Activated T-helper 1 cell treated with anti-CD3 and anti-CD28 coated beads, Interleukin-12 subunit alpha, Interleukin-12 subunit beta, Interleukin-2, Interleukin-4 antibody, amounts not matched to agents 30 ng/mL and 10 ng/mL and 1 ng/mL, durations not matched to agents 14 hours and 24 hours and 36 hours (primary cell): ENCODE measurements at regions of chr21 and their contacts with region 1.

Region 1: DNA sequence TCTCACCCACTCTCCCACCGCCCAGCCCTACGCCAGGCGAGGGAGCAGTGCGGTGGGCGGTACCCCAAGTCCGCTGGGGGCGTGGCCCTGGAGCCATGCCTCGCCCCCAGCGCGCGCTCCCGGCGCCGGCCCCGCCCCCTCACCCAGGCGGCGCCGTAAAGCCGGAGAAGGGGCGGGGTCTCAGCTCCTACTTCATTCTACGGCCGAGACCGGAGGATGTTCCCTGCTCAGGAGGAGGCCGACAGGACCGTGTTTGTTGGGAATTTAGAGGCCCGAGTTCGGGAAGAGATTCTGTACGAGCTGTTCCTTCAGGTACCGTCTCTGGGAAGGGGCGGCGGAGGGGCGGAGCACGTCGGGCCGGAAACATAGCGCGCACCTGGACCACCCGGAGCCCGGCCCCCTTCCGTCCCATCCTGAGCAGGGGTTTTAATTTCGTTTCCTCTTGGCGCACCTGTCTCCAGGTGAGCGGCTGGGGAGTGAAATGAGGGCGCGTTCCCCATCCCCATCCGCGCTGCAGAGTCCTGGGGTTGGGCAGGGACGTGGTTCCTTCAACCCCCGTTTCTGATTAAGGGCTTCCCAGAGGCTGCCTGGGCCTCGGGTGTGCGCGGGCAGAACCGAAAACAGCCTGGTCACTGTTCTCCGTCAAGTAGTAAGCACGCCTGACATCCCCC is at the start of gene RBM11:
- DNase-seq: peak; percentile 59
- H3K4me3 Mint-ChIP-seq: peak within 1 kb of the TSS; percentile 83
- H3K27ac Mint-ChIP-seq: no peak within 1 kb of the TSS
- H3K4me1 Mint-ChIP-seq: peaks cover 5% of the 10 kb centered on the region
- H3K27me3 Mint-ChIP-seq: peaks cover 20% of the 10 kb centered on the region
- total RNA-seq, gene RBM11: 0.66 and 0.86 TPM in 2 replicates

Region 2: DNA sequence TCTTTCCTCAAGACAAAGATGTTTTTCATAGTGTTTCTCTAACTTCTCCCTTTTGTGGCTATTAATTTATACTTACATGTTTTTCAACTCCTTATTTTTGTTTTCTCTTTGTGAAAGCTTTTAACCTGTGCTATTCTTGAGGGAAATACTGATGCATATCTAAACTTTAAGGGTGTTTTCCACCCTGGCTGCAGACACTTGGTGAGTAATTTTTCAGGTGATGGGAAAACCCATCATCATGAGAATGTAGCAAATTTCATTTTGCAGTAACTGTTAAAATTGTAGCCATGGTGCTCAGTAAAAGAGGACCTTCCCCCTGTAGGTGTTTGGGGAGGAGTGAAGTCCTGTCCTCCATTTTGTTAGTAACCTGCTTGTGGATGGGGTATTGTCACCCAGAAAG is 129.6 kb before region 1 on chr21:
- intact Hi-C with region 1: loop called (anchors 10 kb)
- DNase-seq: no peak
- H3K4me3 Mint-ChIP-seq: no peak overlapping the region
- H3K27ac Mint-ChIP-seq: peak overlapping the region; percentile 90
- H3K4me1 Mint-ChIP-seq: peaks cover 33% of the 10 kb centered on the region
- H3K27me3 Mint-ChIP-seq: no peaks in the 10 kb centered on the region

Region 3: DNA sequence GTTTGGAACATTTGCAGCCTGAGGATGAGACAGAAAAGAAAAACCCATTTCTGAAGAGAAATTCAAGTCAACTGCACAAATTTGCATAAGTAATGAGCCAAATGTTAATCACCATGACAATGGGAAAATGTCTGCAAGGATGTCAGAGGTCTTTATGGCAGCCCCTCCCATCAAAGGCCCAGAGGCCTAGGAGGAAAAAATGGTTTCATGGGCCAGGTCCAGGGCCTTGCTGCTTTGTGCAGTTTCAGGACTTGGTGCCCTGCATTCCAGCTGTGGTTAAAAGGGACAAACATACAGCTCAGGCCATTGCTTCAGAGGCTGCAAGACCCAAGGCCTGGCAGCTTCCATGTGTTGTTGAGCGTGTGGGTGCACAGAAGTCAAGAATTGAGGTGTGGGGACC is 13.3 kb after region 1 on chr21:
- intact Hi-C with region 1: no loop called
- DNase-seq: no peak
- H3K4me3 Mint-ChIP-seq: no peak overlapping the region
- H3K27ac Mint-ChIP-seq: no peak overlapping the region
- H3K4me1 Mint-ChIP-seq: no peaks in the 10 kb centered on the region
- H3K27me3 Mint-ChIP-seq: no peaks in the 10 kb centered on the region